Left ventricle myocardium inferior (tissue), 1 donor: ENCODE measurements at regions of chr20 and their contacts with region 1.

Region 1: GRCh38 chr20:23606652-23607049 is 934 bp upstream of the CST9 start:
- DNase-seq: peak; percentile 77
- H3K4me3 ChIP-seq: no peak overlapping the region
- H3K27ac ChIP-seq: no peak overlapping the region
- H3K4me1 ChIP-seq: peaks cover 4% of the 10 kb centered on the region
- H3K27me3 ChIP-seq: peaks cover 29% of the 10 kb centered on the region
- CTCF ChIP-seq: peak; percentile 93

Region 2: DNA sequence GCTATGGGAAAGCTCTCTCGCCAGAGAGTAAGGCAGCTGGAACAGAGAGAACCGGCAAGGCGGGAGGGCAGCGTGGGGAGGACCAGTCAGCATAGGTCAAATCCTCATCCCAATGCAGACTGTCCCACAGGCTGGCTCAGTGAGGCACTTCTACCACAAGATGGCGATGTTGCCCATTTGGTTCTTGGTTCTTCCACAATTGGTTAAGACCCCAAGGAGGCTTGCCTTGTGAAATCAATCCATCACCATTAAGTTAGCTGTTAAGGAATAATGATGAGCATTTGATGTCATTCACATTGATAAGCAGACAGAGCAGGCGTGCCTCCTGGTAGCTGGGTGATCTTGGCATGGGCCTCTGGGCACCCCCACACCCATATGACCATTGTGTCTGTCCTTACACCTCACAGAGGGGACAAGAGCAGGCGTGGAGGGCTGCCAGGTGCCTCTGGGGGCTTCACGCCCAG is 164.8 kb before region 1 on chr20:
- intact Hi-C with region 1: loop called (anchors 10 kb)
- DNase-seq: peak; percentile 47
- H3K4me3 ChIP-seq: no peak overlapping the region
- H3K27ac ChIP-seq: no peak overlapping the region
- H3K4me1 ChIP-seq: no peaks in the 10 kb centered on the region
- H3K27me3 ChIP-seq: no peaks in the 10 kb centered on the region
- CTCF ChIP-seq: peak; percentile 91

Region 3: DNA sequence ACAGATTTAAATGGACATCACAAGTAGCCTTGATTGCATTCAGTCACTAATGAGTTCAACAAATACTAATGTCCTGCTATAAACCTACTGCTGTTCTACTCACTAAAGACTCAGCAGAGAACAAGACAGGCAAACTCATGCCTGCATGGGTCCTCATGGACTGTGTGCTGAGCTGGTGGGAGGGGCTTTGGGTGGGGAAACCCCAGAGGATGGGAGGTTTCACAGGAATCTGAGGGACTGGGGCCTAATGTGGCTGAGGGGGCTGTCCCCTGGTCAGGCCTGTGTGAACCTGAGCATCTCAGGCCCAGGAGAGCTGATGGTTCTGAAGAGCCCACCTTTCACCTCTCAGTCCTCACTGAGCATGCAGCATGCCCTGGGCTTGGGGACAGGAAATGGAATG is 114.4 kb before region 1 on chr20:
- intact Hi-C with region 1: no loop called
- DNase-seq: no peak
- H3K4me3 ChIP-seq: no peak overlapping the region
- H3K27ac ChIP-seq: no peak overlapping the region
- H3K4me1 ChIP-seq: no peaks in the 10 kb centered on the region
- H3K27me3 ChIP-seq: no peaks in the 10 kb centered on the region
- CTCF ChIP-seq: no peak